RWPE1 (cell line): ENCODE measurements at regions of chr20 and their contacts with region 1.

Region 1: GRCh38 chr20:58980700-58981627 is at the start of gene NELFCD:
- DNase-seq: peak; percentile 100
- H3K27ac ChIP-seq: peak within 1 kb of the TSS; percentile 77
- CTCF ChIP-seq: no peak

Region 2: GRCh38 chr20:58907399-58908137 is 73.4 kb before region 1 on chr20:
- CTCF ChIA-PET with region 1: no interaction called
- POLR2A ChIA-PET with region 1: interaction called, 11 read pairs
- DNase-seq: peak; percentile 95
- H3K27ac ChIP-seq: no peak overlapping the region
- CTCF ChIP-seq: no peak

Region 3: DNA sequence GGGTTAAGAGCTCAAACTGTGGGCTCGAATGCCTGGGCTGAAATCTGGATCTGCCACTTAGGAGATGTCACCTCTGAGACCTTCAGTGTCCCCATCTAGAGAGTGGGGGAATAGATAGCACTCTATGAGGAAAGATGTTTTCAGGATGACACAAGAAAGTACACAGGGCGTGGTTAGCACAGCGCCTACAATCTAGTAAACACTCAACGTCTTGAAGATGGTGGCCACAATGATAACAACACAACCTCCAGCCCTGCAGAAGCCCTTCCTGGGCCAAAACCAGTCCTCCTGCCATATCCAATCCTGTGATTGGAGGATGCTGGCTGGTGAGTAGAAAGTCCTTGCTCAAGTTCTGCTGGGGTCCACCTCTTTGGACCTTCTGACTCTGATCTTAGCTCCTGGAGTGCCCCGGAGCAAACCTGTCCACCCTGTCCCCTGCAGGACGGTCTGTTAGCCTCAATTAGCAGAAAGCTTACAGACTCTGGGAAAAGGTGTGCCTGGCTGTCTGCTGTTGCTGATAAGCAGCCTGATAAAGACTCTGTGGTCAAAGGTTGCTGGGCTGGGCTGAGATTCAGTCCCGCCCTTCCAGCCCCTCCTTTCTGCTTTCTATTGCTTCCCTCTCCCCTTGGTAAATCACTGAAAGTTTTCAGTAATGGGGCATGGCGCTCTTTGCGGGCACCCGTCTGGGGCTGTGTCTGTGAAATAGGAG is 327.7 kb after region 1 on chr20:
- CTCF ChIA-PET with region 1: no interaction called
- POLR2A ChIA-PET with region 1: no interaction called
- DNase-seq: no peak
- H3K27ac ChIP-seq: no peak overlapping the region
- CTCF ChIP-seq: no peak